Endothelial cell of umbilical vein (primary cell): ENCODE measurements at regions of chr7 and their contacts with region 1.

Region 1: GRCh38 chr7:45252857-45253256 is 95.3 kb downstream of the RAMP3 start:
- DNase-seq: no peak
- H3K4me3 ChIP-seq: no peak overlapping the region
- H3K27ac ChIP-seq: no peak overlapping the region
- H3K4me1 ChIP-seq: no peaks in the 10 kb centered on the region
- H3K27me3 ChIP-seq: peaks cover 0 to 5% of the 10 kb centered on the region in 2 experiments
- CTCF ChIP-seq: no peak
- POLR2A ChIP-seq: no peak

Region 2: GRCh38 chr7:45157653-45158401 is 95.0 kb before region 1 on chr7 and contains the start of gene RAMP3:
- CTCF ChIA-PET with region 1: interaction called, 13 read pairs
- POLR2A ChIA-PET with region 1: no interaction called
- dilution Hi-C with region 1: no loop called
- intact Hi-C with region 1: no loop called
- DNase-seq: no peak
- H3K4me3 ChIP-seq: no peak within 1 kb of the TSS
- H3K27ac ChIP-seq: no peak within 1 kb of the TSS
- H3K4me1 ChIP-seq: no peaks in the 10 kb centered on the region
- H3K27me3 ChIP-seq: peaks cover 21 to 23% of the 10 kb centered on the region in 2 experiments
- CTCF ChIP-seq: no peak
- POLR2A ChIP-seq: no peak
- total RNA-seq, gene RAMP3: not detected in 2 replicates